ENCODE measurements at regions of chr4 and their contacts with region 1.

Region 1: DNA sequence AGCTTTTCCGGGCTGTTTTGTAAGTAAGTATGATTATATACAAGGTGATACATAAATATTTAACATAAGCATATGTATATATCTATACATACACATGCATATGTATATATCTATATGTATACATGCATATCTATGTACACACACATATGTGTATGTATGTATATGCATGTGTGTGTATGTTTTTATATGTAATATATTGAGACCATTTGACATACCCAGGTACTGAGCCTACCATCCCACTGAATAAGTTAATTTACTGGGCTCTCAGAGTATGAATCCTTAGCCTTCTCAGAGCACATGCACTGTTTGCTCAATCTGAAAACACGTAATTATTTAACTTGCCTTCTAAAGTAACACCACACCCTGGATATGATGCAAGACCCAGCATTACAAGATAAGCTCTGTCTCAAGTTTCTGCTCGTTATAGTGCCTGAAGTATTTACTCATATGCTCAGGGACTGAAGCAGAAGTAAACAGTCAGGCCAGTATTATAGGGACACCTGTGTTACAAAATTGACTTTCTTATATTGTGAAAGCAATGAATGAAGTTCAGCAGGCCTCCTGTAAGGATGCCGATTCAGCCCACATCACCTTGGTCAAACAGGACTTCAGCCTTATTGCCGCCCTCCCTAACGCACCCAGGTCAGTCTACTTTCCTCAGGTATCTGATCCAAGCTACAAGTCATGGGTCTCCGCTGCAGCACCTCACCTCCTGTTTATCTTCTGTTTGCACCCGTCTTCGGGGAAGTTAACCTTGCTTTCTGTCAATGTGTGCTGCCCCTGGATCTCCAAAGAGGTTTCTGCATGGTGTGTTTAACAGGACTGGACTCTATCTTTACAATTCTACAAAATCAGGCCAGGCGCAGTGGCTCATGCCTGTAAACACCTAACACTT is 43.0 kb upstream of the KLF3 start:
- DNase-seq: no peak
- H3K4me3 ChIP-seq: no peak overlapping the region
- H3K27ac ChIP-seq: no peak overlapping the region
- H3K4me1 ChIP-seq: no peaks in the 10 kb centered on the region
- H3K27me3 ChIP-seq: no peaks in the 10 kb centered on the region
- CTCF ChIP-seq: no peak

Region 2: DNA sequence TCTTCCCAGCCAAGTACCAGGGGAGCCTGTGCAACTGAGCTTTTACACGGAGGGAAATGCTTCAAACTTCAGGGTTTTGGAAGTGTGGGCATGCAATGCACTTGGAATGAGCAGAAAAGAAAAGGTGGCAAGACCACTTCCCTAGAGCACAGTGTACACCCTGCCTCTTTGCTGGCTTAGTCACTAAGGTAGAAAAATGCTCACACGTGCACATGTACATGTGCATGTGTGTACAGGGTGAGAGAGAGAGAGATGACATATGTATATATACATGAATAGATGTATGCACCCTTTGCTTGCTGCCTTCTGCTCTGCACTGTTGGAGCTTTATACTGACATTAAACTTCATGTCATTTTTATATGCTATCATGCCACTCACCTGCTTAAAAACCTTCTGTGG is 35.1 kb after region 1 on chr4:
- intact Hi-C with region 1: loop called (anchors 5 kb)
- DNase-seq: no peak
- H3K4me3 ChIP-seq: no peak overlapping the region
- H3K27ac ChIP-seq: no peak overlapping the region
- H3K4me1 ChIP-seq: no peaks in the 10 kb centered on the region
- H3K27me3 ChIP-seq: no peaks in the 10 kb centered on the region
- CTCF ChIP-seq: no peak